ENCODE measurements at regions of chr9 and their contacts with region 1.

Region 1: DNA sequence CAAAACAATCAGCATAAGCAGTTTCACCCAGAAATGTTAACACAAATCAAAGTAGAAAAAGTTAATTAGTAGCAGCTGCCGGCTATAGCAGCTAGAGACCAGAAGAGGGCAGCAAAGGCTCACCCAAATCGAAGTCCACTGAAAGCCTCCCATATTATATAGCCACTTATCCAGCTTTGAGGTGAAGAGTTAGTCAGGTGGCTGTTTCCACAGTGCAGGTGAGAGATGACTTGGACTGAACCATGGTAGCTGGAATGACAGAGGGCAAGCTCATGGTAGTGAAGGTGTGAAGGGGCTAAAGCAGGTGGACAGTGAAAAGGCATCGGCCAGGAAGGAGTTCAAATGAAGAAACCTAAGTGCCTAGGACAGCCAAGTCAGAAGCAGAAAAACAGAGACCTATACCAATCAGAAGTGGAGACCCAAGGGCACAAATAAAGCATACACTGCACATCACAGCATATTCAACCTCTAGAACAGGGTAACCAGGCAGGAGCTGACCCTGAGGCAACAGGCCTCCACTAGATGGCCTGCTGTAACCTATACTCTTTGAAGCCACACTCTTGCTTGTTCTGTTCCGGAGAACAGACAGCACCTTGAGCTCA is 7.2 kb upstream of the RNF38 start:
- DNase-seq: peak; percentile 54
- CTCF ChIP-seq: peak; percentile 73

Region 2: DNA sequence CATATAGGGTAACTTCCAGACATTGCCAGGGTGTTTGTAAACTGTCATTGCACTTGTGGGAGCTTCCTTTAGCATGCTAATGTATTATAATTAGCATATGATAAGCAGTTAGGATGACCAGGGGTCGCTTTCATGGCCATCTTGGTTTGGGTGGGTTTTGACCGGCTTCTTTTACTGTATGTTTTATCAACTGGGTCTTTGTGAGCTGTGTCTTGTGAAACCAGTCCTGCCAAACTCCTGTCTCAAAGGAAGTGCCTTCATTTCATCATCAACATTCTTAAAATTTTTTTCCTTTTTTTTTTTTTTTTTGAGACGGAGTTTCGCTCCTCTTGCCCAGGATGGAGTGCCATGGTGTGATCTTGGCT is 153.6 kb after region 1 on chr9:
- in situ Hi-C with region 1: loop called (anchors 5 kb)
- DNase-seq: no peak
- CTCF ChIP-seq: no peak

Region 3: DNA sequence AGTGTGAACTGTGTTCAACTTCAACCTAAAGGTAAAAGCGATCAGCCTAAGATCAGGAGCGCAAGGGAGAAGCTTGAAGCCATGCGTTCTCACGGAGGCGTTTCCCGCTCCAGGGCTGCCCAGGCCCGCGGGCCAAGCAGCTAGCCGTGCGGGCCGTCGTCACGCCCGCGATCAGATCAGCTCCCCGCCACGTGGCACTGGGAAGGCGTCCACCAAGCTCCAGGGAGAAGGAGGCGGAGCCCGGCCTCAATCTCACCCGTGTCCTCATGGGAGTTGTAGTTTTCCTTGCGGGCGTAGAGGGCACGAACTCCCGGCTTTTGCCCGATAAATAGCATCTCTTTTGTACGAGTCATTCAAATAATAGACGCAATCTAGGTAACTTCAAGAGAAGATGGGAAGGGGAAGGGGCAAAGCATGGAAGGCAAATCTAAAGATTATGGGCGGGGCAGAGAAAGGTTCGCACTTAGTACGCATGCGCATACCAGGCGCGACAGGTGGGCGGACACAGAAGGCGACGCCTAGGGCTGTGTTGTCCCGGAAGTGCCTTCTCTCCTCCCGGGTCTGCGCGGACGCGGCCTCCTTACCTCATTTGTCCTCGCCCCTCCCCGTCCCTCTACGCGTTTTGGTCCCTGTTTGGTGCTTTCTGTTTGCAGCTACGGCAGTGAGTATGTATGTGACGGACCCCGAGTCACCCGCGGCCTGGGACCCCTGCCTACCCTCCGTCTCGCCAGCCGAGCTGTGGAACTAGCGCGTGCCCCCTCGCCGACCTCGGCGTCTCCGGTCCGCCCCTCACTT is 672.3 kb after region 1 on chr9:
- in situ Hi-C with region 1: no loop called
- DNase-seq: peak; percentile 95
- CTCF ChIP-seq: no peak

Measured in GM13976 (cell line).